HEK293 (cell line): ENCODE measurements at regions of chr5 and their contacts with region 1.

Region 1: DNA sequence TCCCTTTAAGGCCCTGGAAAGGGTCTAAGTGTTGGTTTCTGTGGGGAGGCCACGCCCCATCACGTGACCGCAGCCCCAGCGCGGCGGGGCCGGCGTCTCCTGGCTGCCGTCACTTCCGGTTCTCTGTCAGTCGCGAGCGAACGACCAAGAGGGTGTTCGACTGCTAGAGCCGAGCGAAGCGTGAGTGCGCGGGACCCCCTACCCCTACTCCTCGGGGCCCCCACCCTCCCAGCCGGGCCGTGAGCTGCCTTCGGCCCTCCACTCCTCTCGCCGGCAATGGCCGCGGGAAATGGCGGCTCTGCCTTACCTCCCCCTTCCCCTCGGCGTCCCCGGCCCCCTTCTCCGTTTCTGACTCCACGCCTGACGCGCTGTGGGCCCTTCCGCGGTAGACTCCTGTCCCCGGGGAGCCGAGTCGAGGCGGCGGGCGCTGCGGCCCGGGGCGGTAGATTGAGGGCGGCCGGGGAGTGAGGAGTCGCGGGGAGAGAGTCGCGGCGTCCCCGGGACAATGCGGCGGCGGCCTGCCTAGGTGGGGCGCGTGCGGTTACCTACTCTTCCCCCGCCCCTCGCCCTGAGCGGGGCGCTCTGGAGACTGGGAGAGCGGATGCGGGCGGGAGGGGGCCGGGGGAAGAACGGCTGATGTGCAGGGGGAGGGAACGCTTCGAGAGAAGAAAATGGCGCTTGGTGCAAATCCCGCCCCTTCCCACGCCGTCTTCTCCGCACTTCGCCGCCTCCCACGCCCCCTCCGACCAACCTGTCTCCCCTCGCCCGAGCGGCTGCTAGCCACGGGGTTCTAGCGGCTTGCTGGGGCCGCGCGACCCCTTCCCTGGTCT is at the start of gene SUB1:
- H3K4me3 ChIP-seq: peak within 1 kb of the TSS; percentile 96
- H3K27ac ChIP-seq: peak within 1 kb of the TSS; percentile 94
- H3K4me1 ChIP-seq: peaks cover 13% of the 10 kb centered on the region
- CTCF ChIP-seq: peak; percentile 79

Region 2: DNA sequence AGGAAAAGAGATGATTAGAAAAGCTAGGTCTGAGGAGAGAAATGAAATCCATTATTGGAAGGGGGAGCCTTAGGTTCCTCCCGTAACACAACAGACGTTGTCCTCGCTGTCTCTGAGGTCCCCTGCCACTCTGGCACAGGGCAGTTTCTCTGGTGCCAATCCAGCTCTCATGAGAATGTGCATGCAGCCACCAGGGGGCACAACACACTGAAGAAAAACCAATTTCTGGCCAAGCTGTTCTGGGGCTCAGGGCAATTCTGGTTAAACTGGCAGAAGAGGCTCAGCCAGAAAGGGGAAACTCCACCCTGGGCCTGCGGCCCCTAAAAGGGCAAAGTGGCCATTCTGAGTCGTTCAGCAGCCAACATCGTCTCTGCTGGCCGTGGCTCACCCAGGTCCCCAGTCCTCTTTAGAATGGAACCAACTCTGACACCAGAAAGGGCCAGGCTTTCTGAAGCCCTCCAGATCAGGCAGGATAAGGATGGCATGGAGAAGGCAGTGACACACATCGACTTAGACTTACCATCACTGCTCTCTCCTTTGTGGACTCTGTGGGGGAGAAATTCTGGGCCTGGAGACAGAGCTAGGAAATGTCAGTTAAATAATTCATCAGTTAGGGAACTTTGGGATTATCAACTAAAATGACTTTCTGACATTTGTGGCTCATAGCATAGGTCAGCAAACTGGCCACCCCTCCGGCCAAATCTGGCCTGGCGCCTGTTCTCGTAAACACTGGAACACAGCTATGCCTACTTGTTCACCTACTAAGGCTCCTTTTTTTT is 353.0 kb before region 1 on chr5:
- CTCF ChIA-PET with region 1: interaction called, 30 read pairs
- POLR2A ChIA-PET with region 1: no interaction called
- H3K4me3 ChIP-seq: no peak overlapping the region
- H3K27ac ChIP-seq: no peak overlapping the region
- H3K4me1 ChIP-seq: no peaks in the 10 kb centered on the region
- CTCF ChIP-seq: peak; percentile 78; the same call in 1 of the 2 replicates

Region 3: GRCh38 chr5:32489791-32490582 is 95.7 kb before region 1 on chr5:
- CTCF ChIA-PET with region 1: interaction called, 185 read pairs
- POLR2A ChIA-PET with region 1: interaction called, 10 read pairs
- H3K4me3 ChIP-seq: no peak overlapping the region
- H3K27ac ChIP-seq: no peak overlapping the region
- H3K4me1 ChIP-seq: peaks cover 6% of the 10 kb centered on the region; the same call in 1 of the 2 replicates
- CTCF ChIP-seq: peak; percentile 73

Region 4: GRCh38 chr5:32504989-32505596 is 80.6 kb before region 1 on chr5:
- CTCF ChIA-PET with region 1: interaction called, 10 read pairs
- POLR2A ChIA-PET with region 1: interaction called, 4 read pairs
- H3K4me3 ChIP-seq: no peak overlapping the region
- H3K27ac ChIP-seq: no peak overlapping the region
- H3K4me1 ChIP-seq: peaks cover 12% of the 10 kb centered on the region
- CTCF ChIP-seq: no peak

Region 5: GRCh38 chr5:32542216-32543059 is 43.2 kb before region 1 on chr5:
- CTCF ChIA-PET with region 1: interaction called, 10 read pairs
- POLR2A ChIA-PET with region 1: interaction called, 8 read pairs
- H3K4me3 ChIP-seq: no peak overlapping the region
- H3K27ac ChIP-seq: no peak overlapping the region
- H3K4me1 ChIP-seq: no peaks in the 10 kb centered on the region
- CTCF ChIP-seq: no peak

Region 6: GRCh38 chr5:32613050-32613672 is 27.5 kb after region 1 on chr5:
- CTCF ChIA-PET with region 1: interaction called, 15 read pairs
- POLR2A ChIA-PET with region 1: no interaction called
- H3K4me3 ChIP-seq: no peak overlapping the region
- H3K27ac ChIP-seq: no peak overlapping the region
- H3K4me1 ChIP-seq: no peaks in the 10 kb centered on the region
- CTCF ChIP-seq: peak; percentile 85

Region 7: GRCh38 chr5:32887382-32887781 is 301.7 kb after region 1 on chr5:
- CTCF ChIA-PET with region 1: no interaction called
- POLR2A ChIA-PET with region 1: no interaction called
- H3K4me3 ChIP-seq: no peak overlapping the region
- H3K27ac ChIP-seq: no peak overlapping the region
- H3K4me1 ChIP-seq: no peaks in the 10 kb centered on the region
- CTCF ChIP-seq: no peak